T-cell (primary cell): ENCODE measurements at regions of chr3 and their contacts with region 1.

Region 1: DNA sequence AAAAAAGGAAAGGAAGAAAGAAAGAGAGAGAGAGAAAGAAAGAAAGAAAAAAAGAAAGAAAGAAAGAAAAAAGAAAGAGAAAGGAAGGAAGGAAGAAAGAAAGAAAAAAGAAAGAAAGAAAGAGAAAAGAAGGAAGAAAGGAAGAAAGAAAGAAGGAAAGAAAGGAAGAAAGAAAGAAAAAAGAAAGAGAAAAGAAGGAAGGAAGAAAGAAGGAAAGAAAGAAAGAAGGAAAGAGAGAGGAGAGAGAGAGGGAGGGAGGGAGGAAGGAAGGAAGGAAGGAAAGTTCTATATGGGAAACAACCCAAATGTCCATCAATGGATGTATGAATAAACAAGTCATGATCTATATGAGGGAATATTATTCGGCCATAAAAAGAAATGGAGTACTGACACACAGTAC is 28.8 kb upstream of the TM4SF1 start:
- DNase-seq: no peak
- ATAC-seq: no peak
- H3K4me3 ChIP-seq: no peak overlapping the region
- H3K4me3 Mint-ChIP-seq: no peak overlapping the region
- H3K27ac ChIP-seq: no peak overlapping the region
- H3K27ac Mint-ChIP-seq: no peak overlapping the region
- H3K4me1 ChIP-seq: no peaks in the 10 kb centered on the region
- H3K4me1 Mint-ChIP-seq: no peaks in the 10 kb centered on the region
- H3K27me3 ChIP-seq: no peaks in the 10 kb centered on the region
- H3K27me3 Mint-ChIP-seq: peaks cover 15 to 28% of the 10 kb centered on the region in 2 donors

Region 2: GRCh38 chr3:149330609-149331331 is 75.5 kb before region 1 on chr3:
- CTCF ChIA-PET with region 1: no interaction called
- POLR2A ChIA-PET with region 1: no interaction called
- DNase-seq: no peak
- ATAC-seq: no peak
- H3K4me3 ChIP-seq: no peak overlapping the region
- H3K4me3 Mint-ChIP-seq: no peak overlapping the region
- H3K27ac ChIP-seq: no peak overlapping the region
- H3K27ac Mint-ChIP-seq: no peak overlapping the region
- H3K4me1 ChIP-seq: no peaks in the 10 kb centered on the region
- H3K4me1 Mint-ChIP-seq: no peaks in the 10 kb centered on the region
- H3K27me3 ChIP-seq: no peaks in the 10 kb centered on the region
- H3K27me3 Mint-ChIP-seq: peaks cover 7 to 18% of the 10 kb centered on the region in 2 donors

Region 3: GRCh38 chr3:149435996-149436885 is 29.9 kb after region 1 on chr3:
- CTCF ChIA-PET with region 1: no interaction called
- POLR2A ChIA-PET with region 1: interaction called in 1 of 2 experiments, 13 read pairs
- DNase-seq: no peak
- ATAC-seq: no peak
- H3K4me3 ChIP-seq: no peak overlapping the region
- H3K4me3 Mint-ChIP-seq: no peak overlapping the region
- H3K27ac ChIP-seq: no peak overlapping the region
- H3K27ac Mint-ChIP-seq: no peak overlapping the region
- H3K4me1 ChIP-seq: no peaks in the 10 kb centered on the region
- H3K4me1 Mint-ChIP-seq: no peaks in the 10 kb centered on the region
- H3K27me3 ChIP-seq: peaks cover 0 to 9% of the 10 kb centered on the region in 2 experiments
- H3K27me3 Mint-ChIP-seq: peaks cover 10 to 18% of the 10 kb centered on the region in 2 donors